ENCODE measurements at regions of chr11 and their contacts with region 1.

Region 1: DNA sequence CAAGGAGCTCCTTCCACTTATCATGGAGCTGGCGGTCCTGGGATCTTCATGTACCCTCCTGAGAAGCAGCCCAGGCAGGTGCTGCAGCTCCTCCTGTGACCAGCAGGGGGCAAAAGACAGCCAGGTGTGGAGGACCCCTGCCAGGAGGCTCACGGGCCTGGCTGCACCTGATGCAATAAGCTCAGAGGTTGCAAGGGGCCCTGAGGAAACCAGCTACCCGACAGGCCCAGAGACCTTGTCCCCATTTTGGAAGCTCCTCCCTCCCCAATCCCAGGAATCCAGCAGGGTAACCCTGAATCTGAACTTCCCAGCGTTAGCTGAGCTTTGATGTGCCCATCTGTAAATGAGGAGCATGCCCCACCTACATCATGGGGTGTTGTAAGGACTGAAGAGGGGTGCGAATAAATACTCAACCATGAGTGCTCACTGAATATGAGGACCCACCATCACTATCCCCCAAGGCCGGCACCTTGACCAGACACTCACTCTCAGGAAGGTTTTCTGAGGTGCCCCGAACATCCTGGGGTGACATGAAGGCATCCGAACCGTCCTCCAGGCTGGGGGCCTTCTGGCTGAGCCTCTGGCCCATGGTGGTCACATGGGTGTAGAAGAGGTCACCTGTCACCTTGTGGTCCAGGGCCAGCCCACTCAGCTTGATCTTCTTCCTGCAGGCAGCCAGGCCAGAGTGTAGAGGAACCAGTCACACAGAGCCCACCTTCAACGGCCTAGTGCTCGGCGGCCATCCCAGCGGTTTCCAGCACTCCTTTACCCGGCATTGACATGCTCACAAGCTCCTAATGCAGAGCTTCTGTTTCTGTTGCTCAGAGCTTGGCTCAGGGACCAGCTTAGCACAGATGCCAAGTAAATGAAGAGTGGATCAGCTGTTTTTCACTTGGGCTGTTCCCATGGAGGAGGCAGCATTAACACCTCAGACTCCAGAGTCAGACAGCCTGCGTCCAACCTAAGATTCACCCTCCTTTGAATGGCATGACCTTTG is 21.7 kb downstream of the SLC43A1 start:
- DNase-seq: peak; percentile 76 to 84
- H3K4me3 ChIP-seq: no peak overlapping the region
- H3K27ac ChIP-seq: peak overlapping the region; percentile 79
- H3K4me1 ChIP-seq: peaks cover 30% of the 10 kb centered on the region
- H3K27me3 ChIP-seq: no peaks in the 10 kb centered on the region
- CTCF ChIP-seq: peak; percentile 99

Region 2: GRCh38 chr11:57426929-57427726 is 66.7 kb before region 1 on chr11 and contains the start of gene SLC43A3:
- CTCF ChIA-PET with region 1: interaction called, 3 read pairs
- POLR2A ChIA-PET with region 1: no interaction called
- intact Hi-C with region 1: loop called (anchors 5 kb)
- DNase-seq: peak; percentile 77 to 93
- H3K4me3 ChIP-seq: peak within 1 kb of the TSS; percentile 73
- H3K27ac ChIP-seq: peak within 1 kb of the TSS; percentile 91
- H3K4me1 ChIP-seq: peaks cover 44% of the 10 kb centered on the region
- H3K27me3 ChIP-seq: no peaks in the 10 kb centered on the region
- CTCF ChIP-seq: no peak
- total RNA-seq, gene SLC43A3: 35.7 and 41.3 TPM in 2 replicates

Region 3: DNA sequence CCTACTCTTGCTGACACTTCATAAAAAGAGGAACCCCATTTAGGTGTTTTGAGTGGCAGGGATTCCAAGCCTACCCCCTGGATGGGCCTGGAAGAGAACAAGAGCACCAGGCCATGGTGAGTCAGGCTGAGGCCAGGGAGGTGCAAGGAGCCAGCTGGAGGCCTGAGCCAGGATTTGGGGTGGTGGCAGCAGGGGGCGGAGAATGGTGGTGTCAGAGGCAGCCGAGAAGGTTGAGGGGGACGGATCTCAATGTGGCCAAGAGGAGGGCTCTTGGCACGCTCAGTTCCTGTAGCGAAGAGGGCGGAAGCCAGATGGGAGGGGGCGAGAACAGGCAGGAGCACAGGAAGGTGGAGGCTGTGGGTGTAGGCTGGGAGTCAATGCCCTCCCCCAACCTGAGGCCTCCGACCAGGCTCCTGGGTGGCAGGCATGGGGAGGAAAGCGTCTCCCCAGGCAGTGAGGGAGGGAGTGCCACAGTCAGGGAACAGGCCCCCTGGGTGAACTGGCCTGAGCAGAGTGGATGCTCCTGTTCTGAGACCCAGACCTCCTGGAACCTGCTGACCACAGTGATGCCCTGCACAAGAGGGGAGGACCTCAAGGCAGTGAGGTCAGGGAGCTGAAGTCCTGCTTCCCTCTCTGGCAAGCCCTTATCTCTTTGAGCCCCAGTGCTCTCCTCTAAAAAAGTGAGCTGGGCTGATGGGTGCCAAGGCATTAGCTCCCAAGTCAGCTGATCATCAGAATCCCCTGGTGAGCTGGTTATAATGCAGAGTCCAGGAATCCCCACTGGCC is 19.6 kb before region 1 on chr11:
- CTCF ChIA-PET with region 1: interaction called, 14 read pairs
- POLR2A ChIA-PET with region 1: no interaction called
- intact Hi-C with region 1: no loop called
- DNase-seq: no peak
- H3K4me3 ChIP-seq: no peak overlapping the region
- H3K27ac ChIP-seq: no peak overlapping the region
- H3K4me1 ChIP-seq: peaks cover 12% of the 10 kb centered on the region
- H3K27me3 ChIP-seq: no peaks in the 10 kb centered on the region
- CTCF ChIP-seq: no peak

Region 4: GRCh38 chr11:57515332-57516060 is 21.7 kb after region 1 on chr11 and contains the start of gene SLC43A1:
- CTCF ChIA-PET with region 1: interaction called, 10 read pairs
- POLR2A ChIA-PET with region 1: interaction called, 3 read pairs
- intact Hi-C with region 1: no loop called
- DNase-seq: peak; percentile 42 to 49
- H3K4me3 ChIP-seq: peak within 1 kb of the TSS; percentile 69
- H3K27ac ChIP-seq: no peak within 1 kb of the TSS
- H3K4me1 ChIP-seq: peaks cover 12% of the 10 kb centered on the region; the same call in 1 of the 2 replicates
- H3K27me3 ChIP-seq: peaks cover 21% of the 10 kb centered on the region
- CTCF ChIP-seq: no peak
- total RNA-seq, gene SLC43A1: 3.2 and 4.0 TPM in 2 replicates

Region 5: GRCh38 chr11:57567515-57568329 is 73.9 kb after region 1 on chr11 and contains the start of gene UBE2L6:
- CTCF ChIA-PET with region 1: interaction called, 7 read pairs
- POLR2A ChIA-PET with region 1: interaction called, 4 read pairs
- intact Hi-C with region 1: loop called (anchors 1 kb)
- DNase-seq: peak in 1 of 2 experiments; percentile 62
- H3K4me3 ChIP-seq: peak within 1 kb of the TSS; percentile 89
- H3K27ac ChIP-seq: no peak within 1 kb of the TSS
- H3K4me1 ChIP-seq: peaks cover 24% of the 10 kb centered on the region
- H3K27me3 ChIP-seq: no peaks in the 10 kb centered on the region
- CTCF ChIP-seq: no peak
- total RNA-seq, gene UBE2L6: 121 and 122 TPM in 2 replicates